ENCODE measurements at regions of chr14 and their contacts with region 1.

Region 1: GRCh38 chr14:50109342-50109741 is 7.0 kb downstream of the VCPKMT start:
- DNase-seq: peak; percentile 11
- H3K4me3 ChIP-seq: no peak overlapping the region
- H3K27ac ChIP-seq: no peak overlapping the region
- H3K4me1 ChIP-seq: no peaks in the 10 kb centered on the region
- H3K27me3 ChIP-seq: no peaks in the 10 kb centered on the region
- CTCF ChIP-seq: peak in 1 of 2 donors; percentile 23
- POLR2A ChIP-seq: no peak

Region 2: DNA sequence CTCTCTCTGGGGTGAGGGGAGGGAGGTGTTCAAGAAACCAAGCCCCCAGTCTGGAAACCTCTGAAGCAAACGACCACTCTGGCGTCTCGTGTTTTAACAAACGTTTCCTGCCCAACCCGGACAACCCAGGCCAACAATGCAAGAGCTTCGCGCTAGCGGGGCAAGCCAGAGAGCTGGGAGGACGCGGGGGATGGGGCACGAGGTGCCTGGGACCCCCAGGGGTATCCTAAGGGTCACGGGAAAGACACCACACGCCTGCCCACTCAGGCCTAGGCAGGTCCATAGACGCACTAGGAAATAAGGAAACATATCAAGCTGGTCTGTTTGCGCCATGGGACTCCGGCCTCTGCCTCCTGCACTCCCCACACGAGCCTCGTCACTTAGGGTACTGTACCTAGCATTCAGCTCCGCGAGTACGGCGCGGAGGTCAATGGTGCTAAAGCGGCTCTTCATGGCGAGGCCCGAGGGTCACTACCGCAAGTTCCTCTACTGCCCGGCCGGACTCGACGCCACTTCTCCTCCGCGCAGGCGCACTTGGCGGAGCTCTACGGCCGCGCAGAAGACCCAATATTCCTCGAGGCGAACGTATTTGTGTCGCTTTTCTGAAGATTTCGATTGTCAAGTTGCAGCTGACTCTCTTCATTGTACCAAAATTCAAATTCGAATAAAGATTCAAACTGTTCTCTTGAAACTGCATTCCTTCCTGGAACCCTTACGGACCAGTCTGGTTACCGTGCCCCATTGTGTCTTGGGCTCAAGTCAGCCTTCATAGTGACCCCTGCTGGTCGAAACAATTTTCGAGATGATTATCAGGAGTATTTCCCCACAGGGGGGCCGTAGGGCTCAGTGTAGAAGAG is 256.8 kb before region 1 on chr14 and contains the start of gene NEMF:
- CTCF ChIA-PET with region 1: interaction called, 44 read pairs
- POLR2A ChIA-PET with region 1: no interaction called
- dilution Hi-C with region 1: no loop called
- intact Hi-C with region 1: loop called (anchors 1 kb)
- DNase-seq: peak; percentile 94
- H3K4me3 ChIP-seq: peak within 1 kb of the TSS; percentile 92 to 97 (median 94)
- H3K27ac ChIP-seq: peak within 1 kb of the TSS; percentile 83
- H3K4me1 ChIP-seq: peaks cover 11% of the 10 kb centered on the region
- H3K27me3 ChIP-seq: no peaks in the 10 kb centered on the region
- CTCF ChIP-seq: peak; percentile 68 to 87
- POLR2A ChIP-seq: peak; percentile 89
- total RNA-seq, gene NEMF: 71.4 and 74.2 TPM in 2 replicates

Region 3: GRCh38 chr14:49862089-49862673 is 247.2 kb before region 1 on chr14:
- CTCF ChIA-PET with region 1: interaction called, 242 read pairs
- POLR2A ChIA-PET with region 1: interaction called, 7 read pairs
- dilution Hi-C with region 1: loop called (anchors 10 kb)
- intact Hi-C with region 1: loop called (anchors 1 kb)
- DNase-seq: peak; percentile 93
- H3K4me3 ChIP-seq: peak overlapping the region; percentile 59 to 91 (median 73)
- H3K27ac ChIP-seq: peak overlapping the region; percentile 77
- H3K4me1 ChIP-seq: peaks cover 15% of the 10 kb centered on the region
- H3K27me3 ChIP-seq: no peaks in the 10 kb centered on the region
- CTCF ChIP-seq: peak; percentile 100
- POLR2A ChIP-seq: no peak

Region 4: DNA sequence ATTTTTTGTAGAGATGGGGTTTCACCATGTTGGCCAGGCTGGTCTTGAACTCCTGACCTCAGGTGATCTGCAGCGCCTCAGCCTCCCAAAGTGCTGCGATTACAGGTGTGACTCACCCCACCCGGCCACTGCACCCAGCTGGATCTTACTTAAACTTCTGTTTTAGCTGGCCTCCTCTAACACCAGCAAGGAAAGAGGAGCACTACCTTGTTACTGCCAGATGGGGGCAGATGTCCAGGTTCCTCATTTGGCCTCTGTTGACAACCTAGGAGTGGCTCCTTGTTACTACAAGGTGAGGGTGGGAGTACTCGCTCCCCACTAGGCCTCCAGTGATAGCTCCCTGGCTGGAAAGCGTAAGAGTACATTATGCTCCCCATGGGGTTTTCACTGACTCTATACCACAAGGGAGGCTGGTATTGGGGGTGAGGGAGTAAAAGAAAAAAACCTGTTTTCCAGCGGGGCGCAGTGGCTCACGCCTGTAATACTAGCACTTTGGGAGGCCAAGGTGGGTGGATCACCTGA is 229.6 kb before region 1 on chr14:
- CTCF ChIA-PET with region 1: interaction called, 36 read pairs
- POLR2A ChIA-PET with region 1: no interaction called
- dilution Hi-C with region 1: no loop called
- intact Hi-C with region 1: loop called (anchors 1 kb)
- DNase-seq: peak; percentile 66
- H3K4me3 ChIP-seq: no peak overlapping the region
- H3K27ac ChIP-seq: no peak overlapping the region
- H3K4me1 ChIP-seq: no peaks in the 10 kb centered on the region
- H3K27me3 ChIP-seq: no peaks in the 10 kb centered on the region
- CTCF ChIP-seq: peak; percentile 72 to 73
- POLR2A ChIP-seq: no peak

Region 5: GRCh38 chr14:49892636-49893308 is 216.6 kb before region 1 on chr14 and contains the start of gene ARF6:
- CTCF ChIA-PET with region 1: interaction called, 7 read pairs
- POLR2A ChIA-PET with region 1: no interaction called
- dilution Hi-C with region 1: no loop called
- intact Hi-C with region 1: loop called (anchors 1 kb)
- DNase-seq: peak; percentile 97
- H3K4me3 ChIP-seq: peak within 1 kb of the TSS; percentile 27 to 92 (median 70)
- H3K27ac ChIP-seq: peak within 1 kb of the TSS; percentile 98
- H3K4me1 ChIP-seq: peaks cover 31% of the 10 kb centered on the region
- H3K27me3 ChIP-seq: no peaks in the 10 kb centered on the region
- CTCF ChIP-seq: no peak
- POLR2A ChIP-seq: peak; percentile 91
- total RNA-seq, gene ARF6: 73.2 and 73.6 TPM in 2 replicates